ENCODE measurements at regions of chrX and their contacts with region 1.

Region 1: GRCh38 chrX:1591102-1591900 is at the start of gene AKAP17A:
- DNase-seq: peak; percentile 96 to 99
- H3K4me3 ChIP-seq: peak within 1 kb of the TSS; percentile 96
- H3K4me3 Mint-ChIP-seq: peak within 1 kb of the TSS; percentile 87
- H3K27ac Mint-ChIP-seq: peak within 1 kb of the TSS; percentile 84
- H3K4me1 ChIP-seq: peaks cover 4% of the 10 kb centered on the region; the same call in 1 of the 2 replicates
- H3K4me1 Mint-ChIP-seq: no peaks in the 10 kb centered on the region
- H3K27me3 ChIP-seq: no peaks in the 10 kb centered on the region
- H3K27me3 Mint-ChIP-seq: no peaks in the 10 kb centered on the region
- CTCF ChIP-seq: peak in 1 of 2 experiments; percentile 6
- total RNA-seq, gene AKAP17A: 39.9 and 42.2 TPM in 2 replicates

Region 2: GRCh38 chrX:1564750-1565683 is 26.3 kb before region 1 on chrX:
- CTCF ChIA-PET with region 1: no interaction called
- POLR2A ChIA-PET with region 1: no interaction called
- intact Hi-C with region 1: loop called (anchors 1 kb)
- DNase-seq: no peak
- H3K4me3 ChIP-seq: no peak overlapping the region
- H3K4me3 Mint-ChIP-seq: no peak overlapping the region
- H3K27ac Mint-ChIP-seq: no peak overlapping the region
- H3K4me1 ChIP-seq: no peaks in the 10 kb centered on the region
- H3K4me1 Mint-ChIP-seq: no peaks in the 10 kb centered on the region
- H3K27me3 ChIP-seq: no peaks in the 10 kb centered on the region
- H3K27me3 Mint-ChIP-seq: peaks cover 5% of the 10 kb centered on the region
- CTCF ChIP-seq: no peak

Region 3: DNA sequence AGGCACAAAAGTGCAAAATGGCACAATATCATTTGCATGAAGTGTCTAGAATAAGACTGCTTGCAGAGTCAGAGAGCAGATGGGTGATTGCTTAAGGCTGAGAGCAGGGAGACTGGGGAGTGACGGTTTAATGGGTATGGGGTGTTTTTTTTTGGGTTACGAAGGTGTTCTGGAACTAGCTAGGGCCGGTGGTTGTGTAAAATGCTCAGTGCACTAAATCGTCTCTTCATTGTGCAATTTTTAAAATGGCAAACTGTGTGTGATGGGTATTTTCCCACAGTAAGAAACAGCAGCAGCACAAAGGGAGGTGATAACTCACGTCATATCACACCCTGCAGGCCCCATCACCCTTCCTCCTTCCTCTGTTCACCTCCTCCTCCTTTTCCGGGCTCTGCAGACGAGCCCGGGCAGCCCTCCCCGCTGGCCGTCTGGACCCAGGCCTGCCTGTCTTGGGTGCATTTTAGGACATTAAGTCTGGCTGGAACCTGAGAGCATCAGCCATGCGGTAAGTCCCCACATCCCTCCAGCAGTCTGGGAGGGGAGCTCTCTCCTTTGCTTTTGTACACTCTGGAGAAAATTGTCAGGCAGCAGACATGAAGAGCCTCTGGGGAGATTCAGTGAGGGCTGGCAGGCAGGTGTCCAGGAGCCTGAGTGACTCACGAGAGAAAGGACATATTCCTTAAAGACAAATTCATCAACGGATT is 66.2 kb after region 1 on chrX:
- CTCF ChIA-PET with region 1: no interaction called
- POLR2A ChIA-PET with region 1: no interaction called
- intact Hi-C with region 1: no loop called
- DNase-seq: no peak
- H3K4me3 ChIP-seq: no peak overlapping the region
- H3K4me3 Mint-ChIP-seq: peak overlapping the region; percentile 21
- H3K27ac Mint-ChIP-seq: peak overlapping the region; percentile 52
- H3K4me1 ChIP-seq: no peaks in the 10 kb centered on the region
- H3K4me1 Mint-ChIP-seq: peaks cover 8% of the 10 kb centered on the region
- H3K27me3 ChIP-seq: no peaks in the 10 kb centered on the region
- H3K27me3 Mint-ChIP-seq: no peaks in the 10 kb centered on the region
- CTCF ChIP-seq: no peak

Measured in Caco-2 (cell line).